Right lobe of liver (tissue), 6 donors: ENCODE measurements at regions of chr1 and their contacts with region 1.

Region 1: GRCh38 chr1:33055210-33056008 is 18.7 kb upstream of the AK2 start:
- DNase-seq: peak; percentile 67 to 83 (median 76)
- ATAC-seq: peak; percentile 89 to 94 (median 92)
- H3K4me3 ChIP-seq: no peak overlapping the region
- H3K27ac ChIP-seq: peak overlapping the region in 2 of 3 donors; percentile 59 to 66
- H3K4me1 ChIP-seq: peaks cover 0 to 14% (median 5%) of the 10 kb centered on the region in 4 donors
- H3K27me3 ChIP-seq: no peaks in the 10 kb centered on the region
- CTCF ChIP-seq: peak; percentile 64 to 76 (median 66)
- POLR2A ChIP-seq: no peak

Region 2: DNA sequence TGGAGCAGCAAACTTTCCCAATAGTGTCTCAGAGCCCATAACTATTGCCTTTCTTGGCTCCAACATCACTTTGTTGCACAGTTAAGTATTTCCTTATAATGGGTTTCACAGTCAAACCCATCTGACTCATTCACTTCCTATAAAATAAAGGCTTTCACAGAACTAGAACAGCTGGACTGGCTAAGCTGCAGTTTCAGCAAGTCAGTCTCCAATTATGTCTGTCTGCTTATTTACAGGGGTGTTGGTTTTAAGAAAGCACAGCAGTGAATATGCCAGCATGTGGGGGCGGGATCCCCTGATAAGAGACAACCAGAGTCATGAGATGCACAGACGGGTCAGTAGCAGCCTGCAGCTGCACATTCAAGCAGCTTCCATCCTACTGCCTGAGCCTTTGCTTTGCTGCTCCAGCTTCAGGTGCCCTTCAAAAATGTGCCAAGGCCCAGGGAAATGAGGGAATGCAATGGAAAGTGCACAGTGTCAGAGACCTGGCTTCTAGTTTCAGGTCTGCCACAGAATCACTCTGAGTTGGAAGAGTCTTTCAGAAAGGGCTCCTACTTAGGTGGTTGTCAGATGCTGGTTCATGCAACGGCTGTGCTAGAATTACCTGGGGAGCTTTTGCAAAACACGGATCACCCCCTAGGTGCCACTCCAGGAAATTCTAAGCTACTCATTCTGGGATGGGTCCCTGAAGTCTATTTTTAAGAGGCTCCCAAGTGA is 115.6 kb before region 1 on chr1:
- intact Hi-C with region 1: loop called in 1 of 2 experiments (anchors 10 kb)
- DNase-seq: no peak
- ATAC-seq: peak in 1 of 4 donors; percentile 31
- H3K4me3 ChIP-seq: no peak overlapping the region
- H3K27ac ChIP-seq: no peak overlapping the region
- H3K4me1 ChIP-seq: peaks cover 0 to 40% (median 10%) of the 10 kb centered on the region in 4 donors
- H3K27me3 ChIP-seq: no peaks in the 10 kb centered on the region
- CTCF ChIP-seq: no peak
- POLR2A ChIP-seq: no peak

Region 3: GRCh38 chr1:32992489-32993323 is 62.7 kb before region 1 on chr1:
- intact Hi-C with region 1: no loop called
- DNase-seq: peak; percentile 58 to 75 (median 63)
- ATAC-seq: peak; percentile 57 to 75 (median 63)
- H3K4me3 ChIP-seq: no peak overlapping the region
- H3K27ac ChIP-seq: peak overlapping the region in 2 of 3 donors; percentile 32 to 59
- H3K4me1 ChIP-seq: peaks cover 0 to 21% (median 0%) of the 10 kb centered on the region in 4 donors
- H3K27me3 ChIP-seq: no peaks in the 10 kb centered on the region
- CTCF ChIP-seq: no peak
- POLR2A ChIP-seq: no peak

Region 4: DNA sequence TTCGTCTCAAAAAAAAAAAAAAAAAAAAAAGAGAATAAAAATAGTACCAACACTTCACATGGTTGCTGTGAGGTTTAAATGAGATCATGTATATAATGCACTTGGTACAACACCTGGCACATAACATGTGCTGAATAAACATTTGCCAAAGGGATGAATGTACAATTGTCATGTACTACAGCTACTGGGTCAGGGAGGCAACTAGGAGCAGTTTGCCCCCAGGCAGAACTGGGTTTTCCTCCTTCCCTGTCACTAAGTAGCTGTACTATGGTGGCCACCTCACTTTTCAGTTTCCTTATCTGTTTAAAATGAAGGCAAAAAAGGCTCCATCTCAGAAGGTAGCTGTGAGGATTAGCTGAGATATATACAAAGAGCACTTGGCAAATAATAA is 30.2 kb before region 1 on chr1:
- intact Hi-C with region 1: no loop called
- DNase-seq: no peak
- ATAC-seq: no peak
- H3K4me3 ChIP-seq: no peak overlapping the region
- H3K27ac ChIP-seq: no peak overlapping the region
- H3K4me1 ChIP-seq: peaks cover 0 to 76% (median 30%) of the 10 kb centered on the region in 4 donors
- H3K27me3 ChIP-seq: no peaks in the 10 kb centered on the region
- CTCF ChIP-seq: no peak
- POLR2A ChIP-seq: no peak